BJ (cell line): ENCODE measurements at regions of chr11 and their contacts with region 1.

Region 1: DNA sequence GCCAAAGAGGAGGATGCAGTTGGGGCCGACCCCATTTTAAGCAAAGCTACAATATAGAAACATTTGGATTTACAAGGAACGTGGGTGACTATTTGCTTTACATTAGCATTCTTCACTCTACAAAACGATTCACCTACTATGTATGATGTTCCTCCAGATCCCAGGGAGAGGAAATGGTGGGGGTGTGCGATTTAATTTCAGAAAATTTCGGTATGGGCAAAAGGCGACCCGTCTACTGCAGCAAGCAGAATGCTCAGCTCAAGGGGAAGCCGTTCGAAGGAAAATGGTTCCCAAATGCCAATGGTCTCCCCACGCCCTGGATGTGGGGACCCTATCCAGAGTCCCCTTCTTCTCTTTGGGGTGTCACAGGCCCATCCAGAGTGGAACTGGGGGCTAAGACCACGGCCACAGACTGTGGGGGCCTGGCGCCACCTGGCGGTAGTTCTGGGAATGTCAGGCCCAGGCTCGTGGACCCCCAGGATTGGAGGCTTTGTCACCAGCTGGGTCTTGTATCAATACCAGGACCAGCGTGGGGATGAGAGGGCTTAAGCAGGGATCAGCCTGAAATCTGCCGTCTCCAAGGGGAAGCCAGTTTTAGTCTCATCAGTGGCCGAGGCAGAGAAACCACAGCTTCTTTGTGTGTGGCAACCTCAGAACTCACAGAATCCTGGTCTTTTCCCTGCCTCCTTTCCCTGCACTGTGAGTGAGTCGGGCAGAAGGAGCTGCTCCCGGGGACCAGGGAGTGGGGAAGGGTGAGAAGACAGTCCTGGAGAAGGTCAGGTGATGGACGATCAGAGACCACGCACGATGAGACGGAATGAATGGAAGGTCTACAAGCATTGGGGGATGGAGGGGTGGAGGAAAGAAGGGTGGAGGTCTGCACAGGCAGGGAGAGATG is 8.4 kb downstream of the LRRC10B start:
- DNase-seq: no peak
- H3K4me3 ChIP-seq: peak overlapping the region; percentile 5; the same call in 1 of the 2 replicates
- H3K27me3 ChIP-seq: peaks cover 7% of the 10 kb centered on the region; the same call in 1 of the 2 replicates
- CTCF ChIP-seq: peak; percentile 99

Region 2: DNA sequence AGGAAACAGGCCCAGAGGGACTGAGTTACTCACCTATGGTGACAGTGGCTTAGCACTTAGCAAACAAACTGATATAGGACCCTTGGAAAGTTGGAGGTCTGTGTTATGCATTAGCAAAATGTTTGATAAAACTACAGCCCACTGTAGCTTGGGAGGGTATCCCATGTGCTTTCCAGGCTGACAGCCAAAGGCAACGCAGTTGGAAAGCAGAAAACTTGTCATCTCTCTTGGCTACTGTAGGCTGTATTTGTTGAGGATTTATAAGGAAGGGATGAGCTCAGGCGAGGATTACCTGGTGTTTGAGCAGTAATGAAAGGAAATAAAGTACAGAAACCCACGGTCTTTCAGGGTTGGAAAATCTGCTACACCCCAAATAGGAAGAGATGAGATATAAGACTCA is 63.2 kb before region 1 on chr11:
- CTCF ChIA-PET with region 1: interaction called, 200 read pairs
- POLR2A ChIA-PET with region 1: no interaction called
- DNase-seq: no peak
- H3K4me3 ChIP-seq: no peak overlapping the region
- H3K27me3 ChIP-seq: no peaks in the 10 kb centered on the region
- CTCF ChIP-seq: no peak

Region 3: GRCh38 chr11:61488651-61489291 is 28.2 kb before region 1 on chr11:
- CTCF ChIA-PET with region 1: interaction called, 38 read pairs
- POLR2A ChIA-PET with region 1: no interaction called
- DNase-seq: no peak
- H3K4me3 ChIP-seq: no peak overlapping the region
- H3K27me3 ChIP-seq: peaks cover 6% of the 10 kb centered on the region; the same call in 1 of the 2 replicates
- CTCF ChIP-seq: no peak

Region 4: GRCh38 chr11:61532139-61533038 is 15.5 kb after region 1 on chr11:
- CTCF ChIA-PET with region 1: interaction called, 101 read pairs
- POLR2A ChIA-PET with region 1: no interaction called
- DNase-seq: no peak
- H3K4me3 ChIP-seq: no peak overlapping the region
- H3K27me3 ChIP-seq: peaks cover 11% of the 10 kb centered on the region
- CTCF ChIP-seq: peak; percentile 88

Region 5: GRCh38 chr11:61567286-61568061 is 50.5 kb after region 1 on chr11:
- CTCF ChIA-PET with region 1: interaction called, 13 read pairs
- POLR2A ChIA-PET with region 1: no interaction called
- DNase-seq: no peak
- H3K4me3 ChIP-seq: no peak overlapping the region
- H3K27me3 ChIP-seq: peaks cover 6% of the 10 kb centered on the region; the same call in 1 of the 2 replicates
- CTCF ChIP-seq: peak; percentile 23; the same call in 1 of the 2 replicates

Region 6: GRCh38 chr11:61627567-61628445 is 110.9 kb after region 1 on chr11:
- CTCF ChIA-PET with region 1: interaction called, 24 read pairs
- POLR2A ChIA-PET with region 1: no interaction called
- DNase-seq: no peak
- H3K4me3 ChIP-seq: no peak overlapping the region
- H3K27me3 ChIP-seq: peaks cover 3% of the 10 kb centered on the region
- CTCF ChIP-seq: peak; percentile 92